Activated CD4-positive, alpha-beta T cell treated with anti-CD3 and anti-CD28 coated beads, Interleukin-2, amount 10 ng/mL, durations not matched to agents 24 days and 14 days (primary cell): ENCODE measurements at regions of chr1 and their contacts with region 1.

Region 1: GRCh38 chr1:235642011-235642942 is 7.3 kb downstream of the GNG4 start:
- DNase-seq: peak; percentile 93
- H3K4me3 Mint-ChIP-seq: peak overlapping the region; percentile 87
- H3K27ac Mint-ChIP-seq: peak overlapping the region; percentile 99
- H3K4me1 Mint-ChIP-seq: peaks cover 64% of the 10 kb centered on the region
- H3K27me3 Mint-ChIP-seq: peaks cover 23% of the 10 kb centered on the region

Region 2: GRCh38 chr1:235495551-235495950 is 146.7 kb before region 1 on chr1:
- intact Hi-C with region 1: loop called (anchors 1 kb)
- DNase-seq: no peak
- H3K4me3 Mint-ChIP-seq: no peak overlapping the region
- H3K27ac Mint-ChIP-seq: no peak overlapping the region
- H3K4me1 Mint-ChIP-seq: peaks cover 18% of the 10 kb centered on the region
- H3K27me3 Mint-ChIP-seq: no peaks in the 10 kb centered on the region

Region 3: DNA sequence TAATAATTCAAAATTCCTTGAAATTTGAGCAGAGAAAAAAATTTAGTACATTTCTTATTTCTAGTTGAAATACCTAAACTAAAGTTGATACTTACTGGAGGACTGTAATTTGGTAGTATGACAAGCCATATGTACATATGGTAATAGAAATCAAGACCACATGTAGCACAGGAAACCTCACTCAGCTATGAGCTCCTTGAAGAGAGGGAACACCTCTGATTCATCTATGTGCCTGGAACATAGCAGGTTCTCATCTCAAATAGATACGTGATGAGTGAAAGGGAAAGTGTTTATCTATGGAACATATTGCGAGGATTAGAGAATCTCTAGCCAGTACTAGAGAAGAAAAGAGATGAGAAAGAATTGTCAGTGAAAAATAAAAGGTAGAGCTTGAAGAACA is 55.2 kb after region 1 on chr1:
- intact Hi-C with region 1: loop called (anchors 1 kb)
- DNase-seq: no peak
- H3K4me3 Mint-ChIP-seq: peak overlapping the region; percentile 15
- H3K27ac Mint-ChIP-seq: peak overlapping the region; percentile 82
- H3K4me1 Mint-ChIP-seq: peaks cover 13% of the 10 kb centered on the region
- H3K27me3 Mint-ChIP-seq: no peaks in the 10 kb centered on the region

Region 4: GRCh38 chr1:236142253-236143103 is 500.2 kb after region 1 on chr1 and contains the start of gene GPR137B:
- intact Hi-C with region 1: loop called (anchors 5 kb)
- DNase-seq: peak; percentile 88
- H3K4me3 Mint-ChIP-seq: peak within 1 kb of the TSS; percentile 92
- H3K27ac Mint-ChIP-seq: peak within 1 kb of the TSS; percentile 82
- H3K4me1 Mint-ChIP-seq: peaks cover 28% of the 10 kb centered on the region
- H3K27me3 Mint-ChIP-seq: peaks cover 37% of the 10 kb centered on the region
- total RNA-seq, gene GPR137B: 6.6 and 7.7 TPM in 2 replicates